ENCODE measurements at regions of chr2 and their contacts with region 1.

Region 1: GRCh38 chr2:45643543-45644542 is 7.6 kb upstream of the PRKCE start:
- DNase-seq: peak; percentile 95
- H3K4me3 ChIP-seq: peak overlapping the region; percentile 22 to 66 (median 32)
- H3K27ac ChIP-seq: peak overlapping the region in 1 of 8 donors; percentile 34
- H3K4me1 ChIP-seq: peaks cover 0 to 26% (median 19%) of the 10 kb centered on the region in 6 donors
- H3K27me3 ChIP-seq: peaks cover 0 to 20% (median 14%) of the 10 kb centered on the region in 7 donors
- CTCF ChIP-seq: peak; percentile 94 to 99 (median 98)
- POLR2A ChIP-seq: no peak

Region 2: DNA sequence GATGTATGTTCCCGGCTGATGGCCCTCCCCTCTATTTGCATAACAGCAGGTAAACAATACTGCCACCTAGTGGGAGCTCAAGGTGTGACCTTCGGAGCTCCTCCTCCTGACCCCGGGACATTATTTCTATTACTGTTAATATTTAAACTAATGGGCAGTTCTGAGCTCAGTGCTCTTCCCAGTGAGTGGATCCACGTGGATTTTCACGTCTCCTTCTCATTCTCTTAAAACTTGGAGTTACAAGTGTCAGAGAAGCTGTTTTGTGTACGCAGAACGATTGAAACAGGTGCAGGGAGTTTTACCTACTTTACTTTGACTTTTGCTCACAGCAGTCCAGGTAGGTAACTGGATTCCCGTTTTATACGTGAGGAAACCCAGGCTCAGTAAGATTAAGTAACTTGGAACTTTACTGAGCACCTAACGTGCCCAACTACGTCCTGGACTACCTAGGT is 134.9 kb after region 1 on chr2:
- intact Hi-C with region 1: loop called (anchors 5 kb)
- DNase-seq: no peak
- H3K4me3 ChIP-seq: peak overlapping the region in 1 of 8 donors; percentile 49
- H3K27ac ChIP-seq: no peak overlapping the region
- H3K4me1 ChIP-seq: peaks cover 4 to 72% (median 20%) of the 10 kb centered on the region in 6 donors
- H3K27me3 ChIP-seq: no peaks in the 10 kb centered on the region
- CTCF ChIP-seq: peak; percentile 58 to 90 (median 80)
- POLR2A ChIP-seq: no peak